GM10248 (cell line): ENCODE measurements at regions of chr19 and their contacts with region 1.

Region 1: GRCh38 chr19:41531438-41532311 is 44.3 kb upstream of the CEACAM21 start:
- DNase-seq: peak; percentile 76
- CTCF ChIP-seq: no peak

Region 2: GRCh38 chr19:41426952-41427646 is 104.6 kb before region 1 on chr19 and contains the start of gene B3GNT8:
- CTCF ChIA-PET with region 1: no interaction called
- POLR2A ChIA-PET with region 1: interaction called, 11 read pairs
- DNase-seq: peak; percentile 86
- CTCF ChIP-seq: no peak

Region 3: GRCh38 chr19:41548954-41549688 is 17.4 kb after region 1 on chr19:
- CTCF ChIA-PET with region 1: interaction called, 38 read pairs
- POLR2A ChIA-PET with region 1: interaction called, 26 read pairs
- DNase-seq: peak; percentile 65
- CTCF ChIP-seq: no peak

Region 4: GRCh38 chr19:41563854-41564514 is 32.3 kb after region 1 on chr19:
- CTCF ChIA-PET with region 1: interaction called, 35 read pairs
- POLR2A ChIA-PET with region 1: interaction called, 7 read pairs
- DNase-seq: peak; percentile 28
- CTCF ChIP-seq: no peak

Region 5: GRCh38 chr19:42098781-42099180 is 567.1 kb after region 1 on chr19:
- CTCF ChIA-PET with region 1: no interaction called
- POLR2A ChIA-PET with region 1: interaction called, 12 read pairs
- DNase-seq: no peak
- CTCF ChIP-seq: no peak